ENCODE measurements at regions of chr18 and their contacts with region 1.

Region 1: GRCh38 chr18:12340945-12341660 is 33.1 kb downstream of the TUBB6 start:
- DNase-seq: no peak
- ATAC-seq: no peak
- H3K4me3 ChIP-seq: no peak overlapping the region
- H3K27ac ChIP-seq: no peak overlapping the region
- H3K4me1 ChIP-seq: peaks cover 10 to 19% of the 10 kb centered on the region in 2 experiments; a peak in 3 of 4 replicates
- H3K27me3 ChIP-seq: no peaks in the 10 kb centered on the region
- CTCF ChIP-seq: no peak
- POLR2A ChIP-seq: no peak
- RAD21 ChIP-seq: no peak

Region 2: DNA sequence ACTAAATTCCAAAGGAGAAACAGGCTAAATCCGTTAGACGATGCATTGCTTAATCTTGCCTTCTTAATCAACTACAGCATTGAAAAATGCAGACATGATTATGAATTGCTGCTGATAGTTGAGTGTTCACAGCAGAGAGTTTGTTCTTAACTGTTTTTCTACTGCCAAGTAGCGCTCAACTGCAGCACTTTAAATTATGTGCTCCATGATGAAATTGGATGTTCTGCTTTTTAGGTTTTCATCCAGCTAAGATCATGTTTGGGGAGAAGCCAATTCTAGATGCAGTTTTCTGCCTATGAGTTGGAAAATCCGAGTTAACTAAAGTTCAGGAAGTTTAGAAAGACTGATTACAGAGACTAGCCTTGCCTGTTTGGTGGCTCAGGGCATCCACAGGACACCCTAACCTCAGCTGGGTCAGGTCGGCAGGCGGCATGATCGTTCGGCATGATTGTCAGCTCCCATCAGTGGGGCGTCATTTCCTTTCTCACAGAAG is 1072.3 kb before region 1 on chr18:
- CTCF ChIA-PET with region 1: no interaction called
- POLR2A ChIA-PET with region 1: no interaction called
- RAD21 ChIA-PET with region 1: no interaction called
- intact Hi-C with region 1: no loop called
- DNase-seq: no peak
- ATAC-seq: no peak
- H3K4me3 ChIP-seq: no peak overlapping the region
- H3K27ac ChIP-seq: no peak overlapping the region
- H3K4me1 ChIP-seq: no peaks in the 10 kb centered on the region; a peak in 1 of 4 replicates
- H3K27me3 ChIP-seq: no peaks in the 10 kb centered on the region; the same call in 1 of the 2 replicates
- CTCF ChIP-seq: no peak
- POLR2A ChIP-seq: no peak
- RAD21 ChIP-seq: no peak

Region 3: DNA sequence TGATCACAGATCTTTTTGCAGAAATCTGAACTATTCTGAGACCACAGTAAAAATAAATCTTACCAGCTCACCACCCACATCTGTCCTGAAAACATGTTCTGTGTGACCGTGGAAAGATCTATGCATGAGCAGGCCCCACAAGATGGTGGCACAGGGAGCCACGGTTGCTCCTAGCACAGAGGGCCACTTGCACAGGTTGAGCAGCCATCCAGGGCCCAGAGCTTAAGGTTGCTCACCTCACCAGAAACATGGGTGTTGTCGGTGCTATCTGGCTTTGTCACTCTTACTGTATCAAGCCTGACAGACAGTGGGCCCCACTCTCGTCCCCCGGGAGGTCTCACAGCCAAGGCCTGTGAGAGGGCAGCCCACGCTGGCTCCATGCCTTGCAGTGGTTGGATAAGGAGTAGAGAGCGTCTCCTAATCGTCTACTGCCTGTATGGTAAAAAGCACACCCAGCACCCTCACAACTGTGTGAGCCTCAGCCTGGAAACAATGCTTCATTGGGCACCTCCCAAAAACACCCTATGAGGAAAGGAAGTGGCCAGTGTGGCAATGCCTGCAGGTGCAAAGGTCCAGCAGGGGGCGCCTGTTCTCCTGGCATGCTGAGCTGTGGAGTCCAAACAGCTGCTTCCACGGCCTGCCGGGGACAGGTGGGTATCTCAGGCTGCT is 13.5 kb before region 1 on chr18:
- CTCF ChIA-PET with region 1: interaction called, 17 read pairs
- POLR2A ChIA-PET with region 1: no interaction called
- RAD21 ChIA-PET with region 1: no interaction called
- intact Hi-C with region 1: no loop called
- DNase-seq: peak; percentile 52
- ATAC-seq: peak; percentile 97
- H3K4me3 ChIP-seq: no peak overlapping the region
- H3K27ac ChIP-seq: no peak overlapping the region
- H3K4me1 ChIP-seq: peaks cover 0 to 7% of the 10 kb centered on the region in 2 experiments; a peak in 1 of 4 replicates
- H3K27me3 ChIP-seq: no peaks in the 10 kb centered on the region
- CTCF ChIP-seq: peak; percentile 62 to 98 (median 97); a peak in 5 of 6 replicates
- POLR2A ChIP-seq: no peak
- RAD21 ChIP-seq: peak; percentile 47; the same call in 1 of the 2 replicates

Region 4: GRCh38 chr18:12361770-12362378 is 20.8 kb after region 1 on chr18:
- CTCF ChIA-PET with region 1: no interaction called
- POLR2A ChIA-PET with region 1: no interaction called
- RAD21 ChIA-PET with region 1: no interaction called
- intact Hi-C with region 1: loop called (anchors 2 kb)
- DNase-seq: no peak
- ATAC-seq: no peak
- H3K4me3 ChIP-seq: no peak overlapping the region
- H3K27ac ChIP-seq: no peak overlapping the region
- H3K4me1 ChIP-seq: no peaks in the 10 kb centered on the region
- H3K27me3 ChIP-seq: no peaks in the 10 kb centered on the region
- CTCF ChIP-seq: no peak
- POLR2A ChIP-seq: no peak
- RAD21 ChIP-seq: no peak

Measured in HCT116 (cell line).